Caco-2 (cell line): ENCODE measurements at regions of chr11 and their contacts with region 1.

Region 1: GRCh38 chr11:113532697-113533424 is 57.7 kb upstream of the DRD2 start:
- DNase-seq: peak; percentile 85 to 87
- H3K4me3 ChIP-seq: no peak overlapping the region
- H3K4me3 Mint-ChIP-seq: no peak overlapping the region
- H3K27ac Mint-ChIP-seq: peak overlapping the region; percentile 55
- H3K4me1 ChIP-seq: peaks cover 37% of the 10 kb centered on the region
- H3K4me1 Mint-ChIP-seq: peaks cover 44% of the 10 kb centered on the region
- H3K27me3 ChIP-seq: no peaks in the 10 kb centered on the region
- H3K27me3 Mint-ChIP-seq: no peaks in the 10 kb centered on the region
- CTCF ChIP-seq: peak; percentile 98

Region 2: GRCh38 chr11:113305440-113306336 is 227.2 kb before region 1 on chr11:
- CTCF ChIA-PET with region 1: no interaction called
- POLR2A ChIA-PET with region 1: no interaction called
- intact Hi-C with region 1: loop called (anchors 1 kb)
- DNase-seq: peak; percentile 81 to 88
- H3K4me3 ChIP-seq: no peak overlapping the region
- H3K4me3 Mint-ChIP-seq: no peak overlapping the region
- H3K27ac Mint-ChIP-seq: no peak overlapping the region
- H3K4me1 ChIP-seq: no peaks in the 10 kb centered on the region
- H3K4me1 Mint-ChIP-seq: no peaks in the 10 kb centered on the region
- H3K27me3 ChIP-seq: no peaks in the 10 kb centered on the region; the same call in 1 of the 2 replicates
- H3K27me3 Mint-ChIP-seq: no peaks in the 10 kb centered on the region
- CTCF ChIP-seq: peak; percentile 99

Region 3: GRCh38 chr11:113372309-113372708 is 160.6 kb before region 1 on chr11:
- CTCF ChIA-PET with region 1: no interaction called
- POLR2A ChIA-PET with region 1: no interaction called
- intact Hi-C with region 1: loop called (anchors 1 kb)
- DNase-seq: no peak
- H3K4me3 ChIP-seq: no peak overlapping the region
- H3K4me3 Mint-ChIP-seq: no peak overlapping the region
- H3K27ac Mint-ChIP-seq: no peak overlapping the region
- H3K4me1 ChIP-seq: no peaks in the 10 kb centered on the region
- H3K4me1 Mint-ChIP-seq: no peaks in the 10 kb centered on the region
- H3K27me3 ChIP-seq: no peaks in the 10 kb centered on the region
- H3K27me3 Mint-ChIP-seq: no peaks in the 10 kb centered on the region
- CTCF ChIP-seq: peak in 1 of 2 experiments; percentile 51

Region 4: GRCh38 chr11:113436672-113437252 is 96.1 kb before region 1 on chr11:
- CTCF ChIA-PET with region 1: no interaction called
- POLR2A ChIA-PET with region 1: no interaction called
- intact Hi-C with region 1: loop called (anchors 2 kb)
- DNase-seq: no peak
- H3K4me3 ChIP-seq: no peak overlapping the region
- H3K4me3 Mint-ChIP-seq: no peak overlapping the region
- H3K27ac Mint-ChIP-seq: no peak overlapping the region
- H3K4me1 ChIP-seq: no peaks in the 10 kb centered on the region
- H3K4me1 Mint-ChIP-seq: no peaks in the 10 kb centered on the region
- H3K27me3 ChIP-seq: no peaks in the 10 kb centered on the region
- H3K27me3 Mint-ChIP-seq: no peaks in the 10 kb centered on the region
- CTCF ChIP-seq: peak in 1 of 2 experiments; percentile 30

Region 5: GRCh38 chr11:113474362-113475159 is 58.3 kb before region 1 on chr11:
- CTCF ChIA-PET with region 1: no interaction called
- POLR2A ChIA-PET with region 1: interaction called, 4 read pairs
- intact Hi-C with region 1: loop called (anchors 1 kb)
- DNase-seq: peak; percentile 95 to 99
- H3K4me3 ChIP-seq: peak overlapping the region; percentile 43
- H3K4me3 Mint-ChIP-seq: peak overlapping the region; percentile 59
- H3K27ac Mint-ChIP-seq: no peak overlapping the region
- H3K4me1 ChIP-seq: peaks cover 8% of the 10 kb centered on the region; the same call in 1 of the 2 replicates
- H3K4me1 Mint-ChIP-seq: peaks cover 9% of the 10 kb centered on the region
- H3K27me3 ChIP-seq: peaks cover 7% of the 10 kb centered on the region
- H3K27me3 Mint-ChIP-seq: peaks cover 17% of the 10 kb centered on the region
- CTCF ChIP-seq: no peak